ENCODE measurements at regions of chr1 and their contacts with region 1.

Region 1: GRCh38 chr1:185156854-185157598 is at the starts of genes SWT1 and TRMT1L:
- DNase-seq: peak; percentile 100
- H3K4me3 Mint-ChIP-seq: peak within 1 kb of the TSS; percentile 83
- H3K27ac Mint-ChIP-seq: peak within 1 kb of the TSS; percentile 98
- H3K4me1 Mint-ChIP-seq: peaks cover 40% of the 10 kb centered on the region
- H3K27me3 Mint-ChIP-seq: no peaks in the 10 kb centered on the region
- CTCF ChIP-seq: no peak
- total RNA-seq, gene SWT1: 2.1 and 6.1 TPM in 2 replicates
- total RNA-seq, gene TRMT1L: 23.4 and 29.3 TPM in 2 replicates

Region 2: GRCh38 chr1:184754476-184755225 is 402.4 kb before region 1 on chr1 and contains the start of gene EDEM3:
- CTCF ChIA-PET with region 1: no interaction called
- POLR2A ChIA-PET with region 1: interaction called, 35 read pairs
- intact Hi-C with region 1: loop called (anchors 5 kb)
- DNase-seq: peak; percentile 100
- H3K4me3 Mint-ChIP-seq: peak within 1 kb of the TSS; percentile 93
- H3K27ac Mint-ChIP-seq: peak within 1 kb of the TSS; percentile 96
- H3K4me1 Mint-ChIP-seq: peaks cover 27% of the 10 kb centered on the region
- H3K27me3 Mint-ChIP-seq: no peaks in the 10 kb centered on the region
- CTCF ChIP-seq: no peak
- total RNA-seq, gene EDEM3: 58.3 and 63.5 TPM in 2 replicates

Region 3: DNA sequence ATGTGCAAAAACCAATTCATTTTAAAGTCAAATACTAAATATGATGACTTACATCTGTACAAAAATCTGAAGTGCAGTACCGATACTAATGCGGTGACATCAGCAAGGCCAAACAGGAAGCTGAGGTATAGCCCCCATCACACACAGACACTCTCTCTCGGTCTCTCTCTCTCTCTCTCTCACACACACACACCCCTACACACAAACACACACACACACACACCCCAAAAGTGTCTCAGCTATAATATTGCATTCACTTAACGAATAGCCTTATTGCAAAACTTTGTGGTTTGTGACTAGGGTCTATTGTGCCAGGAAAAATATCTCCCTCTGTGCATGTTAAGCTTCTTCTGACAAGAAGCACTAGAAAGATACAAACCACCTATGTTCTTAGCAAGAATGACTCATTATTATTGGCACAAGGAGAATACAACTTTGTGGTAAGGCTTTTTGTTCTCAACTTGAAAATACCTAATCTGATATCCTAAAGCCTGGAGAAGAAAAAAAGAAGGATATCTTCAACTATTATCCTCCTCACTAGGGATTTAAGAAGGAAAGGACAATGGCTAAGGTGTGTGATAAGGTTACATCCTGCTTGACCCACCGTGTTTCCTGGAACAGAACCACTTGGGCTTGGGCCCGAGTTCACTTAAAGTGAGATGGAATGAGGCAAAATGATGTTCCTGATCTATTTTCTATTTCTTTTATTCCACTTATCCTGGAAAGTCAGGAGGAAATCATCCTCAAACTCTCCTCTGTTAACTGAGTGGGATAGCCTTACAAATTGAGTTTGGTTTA is 289.8 kb before region 1 on chr1:
- CTCF ChIA-PET with region 1: no interaction called
- POLR2A ChIA-PET with region 1: no interaction called
- intact Hi-C with region 1: loop called (anchors 5 kb)
- DNase-seq: peak; percentile 98
- H3K4me3 Mint-ChIP-seq: no peak overlapping the region
- H3K27ac Mint-ChIP-seq: no peak overlapping the region
- H3K4me1 Mint-ChIP-seq: peaks cover 8% of the 10 kb centered on the region
- H3K27me3 Mint-ChIP-seq: peaks cover 100% of the 10 kb centered on the region
- CTCF ChIP-seq: no peak

Region 4: GRCh38 chr1:184965944-184966860 is 190.8 kb before region 1 on chr1:
- CTCF ChIA-PET with region 1: no interaction called
- POLR2A ChIA-PET with region 1: no interaction called
- intact Hi-C with region 1: no loop called
- DNase-seq: no peak
- H3K4me3 Mint-ChIP-seq: no peak overlapping the region
- H3K27ac Mint-ChIP-seq: no peak overlapping the region
- H3K4me1 Mint-ChIP-seq: peaks cover 6% of the 10 kb centered on the region
- H3K27me3 Mint-ChIP-seq: peaks cover 71% of the 10 kb centered on the region
- CTCF ChIP-seq: no peak

Region 5: DNA sequence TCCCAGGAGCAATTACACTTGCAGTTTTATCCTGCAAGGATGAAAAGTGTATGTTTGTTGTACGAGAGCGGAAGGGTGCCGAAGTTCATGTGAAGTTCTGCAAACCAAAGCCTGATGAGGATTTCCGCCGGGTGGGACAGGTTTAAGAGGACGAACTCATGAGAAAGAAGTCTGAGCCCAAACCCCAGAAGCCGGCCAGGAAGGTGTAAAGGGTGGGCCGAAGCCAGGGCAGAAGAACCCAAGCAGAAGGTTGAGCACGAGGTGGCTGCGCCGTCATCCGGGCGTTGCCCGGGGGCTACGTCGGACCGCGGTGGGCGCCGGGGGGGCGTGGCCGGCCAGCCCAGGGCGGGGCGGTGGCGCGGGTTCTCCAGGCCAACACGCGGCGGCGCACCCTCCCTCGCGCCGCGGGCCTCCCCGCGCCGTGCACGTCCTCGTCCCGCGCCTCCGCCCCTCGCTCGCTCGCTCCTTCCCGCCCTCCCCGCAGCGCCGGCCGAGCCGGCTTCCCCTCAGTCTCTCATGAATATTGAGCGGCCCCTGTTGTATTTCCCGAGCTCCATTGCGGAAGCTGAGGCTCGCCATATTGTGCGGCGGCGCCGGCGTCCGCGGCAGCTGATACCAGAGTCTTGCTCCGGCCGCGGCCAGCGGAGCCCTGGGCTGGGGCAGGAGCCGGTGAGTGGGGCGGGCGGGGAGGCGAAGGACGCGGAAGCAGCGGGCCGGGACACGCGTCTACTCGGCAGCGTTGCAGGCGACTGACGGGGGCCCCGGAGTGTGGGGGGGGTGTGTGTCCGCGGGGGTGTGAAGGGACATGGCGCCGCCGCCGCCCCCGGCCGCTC is 111.8 kb before region 1 on chr1 and contains the start of gene RNF2:
- CTCF ChIA-PET with region 1: interaction called, 3 read pairs
- POLR2A ChIA-PET with region 1: interaction called, 40 read pairs
- intact Hi-C with region 1: loop called (anchors 1 kb)
- DNase-seq: peak; percentile 72
- H3K4me3 Mint-ChIP-seq: peak within 1 kb of the TSS; percentile 91
- H3K27ac Mint-ChIP-seq: peak within 1 kb of the TSS; percentile 74
- H3K4me1 Mint-ChIP-seq: peaks cover 5% of the 10 kb centered on the region
- H3K27me3 Mint-ChIP-seq: no peaks in the 10 kb centered on the region
- CTCF ChIP-seq: peak; percentile 10
- total RNA-seq, gene RNF2: 18.6 and 19.0 TPM in 2 replicates

Region 6: GRCh38 chr1:185144233-185144632 is 12.8 kb before region 1 on chr1:
- CTCF ChIA-PET with region 1: interaction called, 3 read pairs
- POLR2A ChIA-PET with region 1: interaction called, 27 read pairs
- intact Hi-C with region 1: no loop called
- DNase-seq: no peak
- H3K4me3 Mint-ChIP-seq: no peak overlapping the region
- H3K27ac Mint-ChIP-seq: no peak overlapping the region
- H3K4me1 Mint-ChIP-seq: no peaks in the 10 kb centered on the region
- H3K27me3 Mint-ChIP-seq: no peaks in the 10 kb centered on the region
- CTCF ChIP-seq: no peak

Region 7: GRCh38 chr1:185170291-185170848 is 13.3 kb after region 1 on chr1:
- CTCF ChIA-PET with region 1: interaction called, 46 read pairs
- POLR2A ChIA-PET with region 1: interaction called, 22 read pairs
- intact Hi-C with region 1: no loop called
- DNase-seq: peak; percentile 84
- H3K4me3 Mint-ChIP-seq: no peak overlapping the region
- H3K27ac Mint-ChIP-seq: no peak overlapping the region
- H3K4me1 Mint-ChIP-seq: no peaks in the 10 kb centered on the region
- H3K27me3 Mint-ChIP-seq: no peaks in the 10 kb centered on the region
- CTCF ChIP-seq: peak; percentile 80

Region 8: GRCh38 chr1:185305419-185305818 is 148.4 kb after region 1 on chr1:
- CTCF ChIA-PET with region 1: no interaction called
- POLR2A ChIA-PET with region 1: no interaction called
- intact Hi-C with region 1: no loop called
- DNase-seq: no peak
- H3K4me3 Mint-ChIP-seq: no peak overlapping the region
- H3K27ac Mint-ChIP-seq: peak overlapping the region; percentile 18
- H3K4me1 Mint-ChIP-seq: no peaks in the 10 kb centered on the region
- H3K27me3 Mint-ChIP-seq: no peaks in the 10 kb centered on the region
- CTCF ChIP-seq: no peak

Region 9: DNA sequence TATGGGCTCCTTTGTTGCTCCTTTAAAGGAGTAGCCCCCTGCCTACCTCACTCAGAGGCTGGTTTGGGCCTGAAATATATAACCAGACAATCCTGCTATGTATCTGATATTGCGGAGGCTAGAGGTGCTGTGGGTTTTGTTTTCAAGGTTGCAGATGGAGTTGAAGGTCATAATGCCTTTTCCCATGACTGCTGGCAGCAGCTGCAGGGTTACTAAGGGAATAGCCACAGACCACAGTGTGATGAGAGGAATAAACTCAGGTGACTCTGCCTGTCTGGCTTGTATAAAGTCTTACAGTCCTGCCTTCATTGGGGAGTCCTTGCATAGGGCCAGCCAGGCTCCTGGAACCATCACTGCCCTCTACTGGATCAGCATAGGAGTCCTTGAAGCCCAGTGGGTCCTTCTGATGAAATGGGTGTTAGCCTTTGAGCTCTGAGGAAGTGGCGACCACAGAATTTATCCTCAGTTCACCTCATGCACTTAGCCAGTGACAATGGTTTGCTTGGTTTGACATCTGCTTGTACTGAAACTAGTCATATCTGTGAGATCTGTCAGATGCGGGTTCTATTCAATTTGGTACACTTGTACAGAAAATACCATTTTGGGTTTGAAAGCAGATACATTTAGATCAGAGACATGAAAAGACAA is 402.8 kb after region 1 on chr1:
- CTCF ChIA-PET with region 1: no interaction called
- POLR2A ChIA-PET with region 1: no interaction called
- intact Hi-C with region 1: loop called (anchors 5 kb)
- DNase-seq: peak; percentile 70
- H3K4me3 Mint-ChIP-seq: no peak overlapping the region
- H3K27ac Mint-ChIP-seq: no peak overlapping the region
- H3K4me1 Mint-ChIP-seq: peaks cover 16% of the 10 kb centered on the region
- H3K27me3 Mint-ChIP-seq: no peaks in the 10 kb centered on the region
- CTCF ChIP-seq: peak; percentile 51

Measured in MCF 10A (cell line).